Activated CD8-positive, alpha-beta T cell treated with anti-CD3 and anti-CD28 coated beads, Interleukin-2, amount 10 ng/mL, durations not matched to agents 7 days and 5 days (primary cell): ENCODE measurements at regions of chr22 and their contacts with region 1.

Region 1: DNA sequence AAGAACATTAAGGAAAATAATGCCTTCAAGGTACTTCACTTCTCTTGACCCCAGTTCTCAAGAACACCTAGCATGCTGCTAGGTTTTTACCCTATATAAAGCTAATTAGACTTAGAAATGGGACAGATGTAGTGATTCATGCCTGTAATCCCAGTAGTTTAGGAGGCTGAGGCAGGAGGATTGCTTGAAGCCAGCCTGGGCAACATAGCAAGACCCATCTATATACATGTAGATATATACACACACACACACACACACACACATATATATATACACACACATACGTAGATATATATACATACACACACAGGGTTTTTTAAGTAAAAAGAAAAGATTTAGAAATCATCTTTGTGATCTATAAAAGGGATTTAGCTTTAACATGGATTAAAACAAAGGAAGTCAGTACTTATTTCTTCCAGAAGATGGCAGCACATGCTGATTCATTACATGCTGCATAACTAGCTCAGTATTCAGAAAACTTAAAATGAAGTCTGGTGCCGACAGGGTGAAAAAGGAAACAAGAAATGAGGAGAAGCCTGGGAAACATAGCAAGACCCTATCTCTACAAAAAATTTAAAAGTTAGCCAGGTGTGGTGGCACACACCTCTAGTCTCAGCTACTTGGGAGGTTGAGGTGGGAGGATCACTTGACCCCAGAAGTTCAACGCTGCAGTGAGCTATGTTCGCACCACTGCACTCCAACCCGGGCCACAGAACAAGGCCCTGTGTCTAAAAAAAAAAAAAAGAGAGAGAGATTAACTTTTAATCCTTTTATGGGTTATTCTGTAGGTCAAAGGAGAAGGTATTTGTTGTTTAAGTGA is 28.5 kb upstream of the RBX1 start:
- DNase-seq: peak; percentile 50
- ATAC-seq: peak; percentile 86
- H3K4me3 Mint-ChIP-seq: no peak overlapping the region
- H3K27ac Mint-ChIP-seq: peak overlapping the region; percentile 60
- H3K4me1 Mint-ChIP-seq: peaks cover 4% of the 10 kb centered on the region
- H3K27me3 Mint-ChIP-seq: no peaks in the 10 kb centered on the region

Region 2: GRCh38 chr22:40856513-40857308 is 66.0 kb before region 1 on chr22 and contains the starts of genes ST13 and XPNPEP3:
- CTCF ChIA-PET with region 1: interaction called, 10 read pairs
- POLR2A ChIA-PET with region 1: no interaction called
- DNase-seq: peak; percentile 98
- ATAC-seq: peak; percentile 94
- H3K4me3 Mint-ChIP-seq: peak within 1 kb of the TSS; percentile 96
- H3K27ac Mint-ChIP-seq: peak within 1 kb of the TSS; percentile 100
- H3K4me1 Mint-ChIP-seq: peaks cover 48% of the 10 kb centered on the region
- H3K27me3 Mint-ChIP-seq: no peaks in the 10 kb centered on the region
- total RNA-seq, gene ST13: 141 to 148 TPM
- total RNA-seq, gene XPNPEP3: 14.6 TPM

Region 3: DNA sequence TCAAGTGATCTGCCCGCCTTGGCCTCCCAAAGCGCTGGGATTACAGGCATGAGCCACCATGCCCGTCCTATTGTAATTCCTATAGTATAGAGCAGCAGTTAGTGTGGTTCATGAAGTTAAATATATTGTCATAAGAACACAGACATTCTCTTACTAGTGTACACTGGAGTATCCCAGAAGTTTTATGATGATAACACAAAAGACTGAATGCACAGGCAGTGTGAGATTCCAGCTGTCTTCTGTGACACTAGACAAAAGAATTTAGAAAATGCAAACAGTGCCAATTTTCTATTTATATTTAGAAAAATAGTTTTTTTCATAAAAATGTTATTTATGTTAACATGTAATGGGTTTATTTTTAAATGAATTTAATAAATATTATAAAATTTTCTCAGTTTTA is 10.9 kb before region 1 on chr22:
- CTCF ChIA-PET with region 1: interaction called, 29 read pairs
- POLR2A ChIA-PET with region 1: interaction called, 3 read pairs
- DNase-seq: no peak
- ATAC-seq: no peak
- H3K4me3 Mint-ChIP-seq: no peak overlapping the region
- H3K27ac Mint-ChIP-seq: no peak overlapping the region
- H3K4me1 Mint-ChIP-seq: no peaks in the 10 kb centered on the region
- H3K27me3 Mint-ChIP-seq: no peaks in the 10 kb centered on the region

Region 4: DNA sequence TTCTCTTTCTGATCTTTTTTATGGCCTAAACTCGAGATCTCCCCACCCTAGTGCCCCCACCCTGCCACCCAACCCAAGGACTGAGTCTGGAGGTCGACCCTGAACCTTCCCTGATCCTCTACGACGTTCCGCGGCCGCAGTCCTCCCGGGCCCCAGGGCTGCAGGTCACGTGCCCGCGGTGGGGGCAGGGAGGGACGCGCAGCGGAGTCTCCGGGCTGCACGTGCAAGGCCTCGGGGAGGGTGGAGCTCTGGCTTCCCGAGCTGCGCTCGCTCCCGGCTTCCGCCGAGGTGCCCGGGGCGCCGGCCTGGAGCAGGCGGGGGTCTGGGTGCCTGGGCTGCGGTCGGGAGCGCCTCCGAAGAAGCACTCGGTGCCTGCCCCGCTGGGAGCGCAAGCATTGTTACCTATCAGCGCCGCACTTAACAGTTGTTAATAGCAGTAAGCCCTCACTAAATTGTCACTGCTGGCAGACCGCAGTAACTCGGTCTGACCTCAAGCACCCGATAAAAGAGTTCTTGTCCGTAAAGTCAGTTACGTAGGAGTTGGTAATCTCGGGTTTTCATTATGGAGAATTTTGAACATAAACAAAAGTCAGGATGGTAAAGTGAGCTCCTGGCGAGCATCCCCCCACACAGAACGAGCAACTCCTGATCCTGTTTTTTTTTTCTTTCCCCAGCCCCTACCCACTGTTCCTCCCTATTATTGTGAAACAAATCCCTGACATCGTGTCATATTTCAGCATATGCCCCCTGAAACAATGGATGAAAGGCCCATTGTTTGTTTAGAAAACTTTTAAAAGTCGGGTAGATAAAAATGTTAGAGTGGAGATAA is 100.0 kb after region 1 on chr22:
- CTCF ChIA-PET with region 1: interaction called, 18 read pairs
- POLR2A ChIA-PET with region 1: no interaction called
- DNase-seq: peak; percentile 83
- ATAC-seq: peak; percentile 75
- H3K4me3 Mint-ChIP-seq: peak overlapping the region; percentile 71
- H3K27ac Mint-ChIP-seq: peak overlapping the region; percentile 86
- H3K4me1 Mint-ChIP-seq: peaks cover 19% of the 10 kb centered on the region
- H3K27me3 Mint-ChIP-seq: peaks cover 16% of the 10 kb centered on the region

Region 5: DNA sequence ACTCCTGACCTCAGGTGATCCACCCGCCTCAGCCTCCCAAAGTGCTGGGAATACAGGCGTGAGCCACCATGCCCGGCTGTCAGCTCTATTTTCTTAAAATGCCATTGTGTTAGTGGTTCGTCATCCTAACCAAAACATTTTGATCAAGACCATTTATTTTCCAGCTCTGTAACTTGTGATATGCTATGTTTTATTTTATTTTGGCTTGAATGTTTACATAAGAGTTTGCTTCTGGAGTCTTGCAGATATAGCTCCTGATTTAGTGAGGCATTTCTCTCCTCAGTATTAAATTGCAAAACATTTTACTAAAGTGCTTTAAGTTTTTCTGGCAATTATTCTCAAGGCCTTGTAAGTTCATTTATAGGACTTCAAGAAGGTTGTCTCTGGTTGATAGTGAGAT is 174.1 kb after region 1 on chr22:
- CTCF ChIA-PET with region 1: interaction called, 24 read pairs
- POLR2A ChIA-PET with region 1: no interaction called
- DNase-seq: no peak
- ATAC-seq: no peak
- H3K4me3 Mint-ChIP-seq: no peak overlapping the region
- H3K27ac Mint-ChIP-seq: no peak overlapping the region
- H3K4me1 Mint-ChIP-seq: peaks cover 48% of the 10 kb centered on the region
- H3K27me3 Mint-ChIP-seq: no peaks in the 10 kb centered on the region

Region 6: GRCh38 chr22:41341990-41342389 is 419.3 kb after region 1 on chr22:
- CTCF ChIA-PET with region 1: no interaction called
- POLR2A ChIA-PET with region 1: no interaction called
- DNase-seq: peak; percentile 28
- ATAC-seq: peak; percentile 64
- H3K4me3 Mint-ChIP-seq: no peak overlapping the region
- H3K27ac Mint-ChIP-seq: peak overlapping the region; percentile 63
- H3K4me1 Mint-ChIP-seq: peaks cover 10% of the 10 kb centered on the region
- H3K27me3 Mint-ChIP-seq: no peaks in the 10 kb centered on the region